ENCODE measurements at regions of chr6 and their contacts with region 1.

Region 1: DNA sequence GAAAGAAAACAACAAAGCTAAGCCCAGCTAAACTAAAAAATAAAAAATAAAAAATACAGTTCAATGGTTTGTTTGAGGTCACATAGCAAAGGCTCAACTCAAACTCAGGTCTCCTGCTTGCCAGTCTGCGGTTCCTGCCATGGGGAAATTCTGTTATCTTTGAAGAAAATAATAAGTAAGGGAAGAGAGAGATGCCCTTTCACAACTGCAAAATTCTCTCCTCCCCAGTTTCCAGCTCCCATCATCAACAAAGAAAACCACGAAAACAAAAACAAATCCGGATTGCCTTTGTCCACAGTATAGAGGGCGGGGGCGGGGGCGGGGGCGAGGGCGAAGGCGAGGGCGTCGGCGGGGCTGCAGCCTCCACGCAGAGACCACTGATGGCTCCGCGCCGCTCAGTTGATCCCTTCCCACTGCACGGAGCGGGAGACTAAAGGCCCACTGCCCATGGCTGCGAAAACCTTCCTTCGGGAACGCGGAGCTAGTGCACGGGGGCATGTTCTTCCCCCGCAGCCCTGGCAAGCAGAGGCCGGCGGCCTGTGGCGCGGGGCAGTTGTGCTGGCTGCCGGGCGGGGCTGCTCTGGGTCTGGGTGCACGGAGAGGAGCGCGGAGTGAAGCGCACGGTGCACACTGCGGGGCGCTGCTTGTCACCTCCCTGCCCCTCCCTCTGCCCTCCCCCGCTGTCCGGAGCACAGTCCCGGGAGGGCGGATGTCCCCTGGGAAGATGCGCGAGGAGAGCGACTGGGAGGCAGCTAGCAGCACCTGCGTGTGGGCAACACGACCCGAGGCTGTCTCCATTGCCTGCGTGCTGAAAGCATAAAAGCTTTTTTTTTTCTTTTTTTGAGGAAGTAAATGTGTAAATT is 54.1 kb upstream of the TPD52L1 start:
- DNase-seq: peak; percentile 34
- H3K4me3 ChIP-seq: peak overlapping the region; percentile 35
- H3K27ac ChIP-seq: no peak overlapping the region
- H3K4me1 ChIP-seq: no peaks in the 10 kb centered on the region
- H3K27me3 ChIP-seq: no peaks in the 10 kb centered on the region
- CTCF ChIP-seq: no peak

Region 2: GRCh38 chr6:124958759-124959354 is 140.6 kb before region 1 on chr6:
- intact Hi-C with region 1: loop called (anchors 10 kb)
- DNase-seq: no peak
- H3K4me3 ChIP-seq: no peak overlapping the region
- H3K27ac ChIP-seq: no peak overlapping the region
- H3K4me1 ChIP-seq: no peaks in the 10 kb centered on the region
- H3K27me3 ChIP-seq: no peaks in the 10 kb centered on the region
- CTCF ChIP-seq: no peak

Region 3: GRCh38 chr6:125451750-125452149 is 352.3 kb after region 1 on chr6:
- intact Hi-C with region 1: no loop called
- DNase-seq: no peak
- H3K4me3 ChIP-seq: no peak overlapping the region
- H3K27ac ChIP-seq: no peak overlapping the region
- H3K4me1 ChIP-seq: no peaks in the 10 kb centered on the region
- H3K27me3 ChIP-seq: no peaks in the 10 kb centered on the region
- CTCF ChIP-seq: no peak